ENCODE measurements at regions of chr5 and their contacts with region 1.

Region 1: DNA sequence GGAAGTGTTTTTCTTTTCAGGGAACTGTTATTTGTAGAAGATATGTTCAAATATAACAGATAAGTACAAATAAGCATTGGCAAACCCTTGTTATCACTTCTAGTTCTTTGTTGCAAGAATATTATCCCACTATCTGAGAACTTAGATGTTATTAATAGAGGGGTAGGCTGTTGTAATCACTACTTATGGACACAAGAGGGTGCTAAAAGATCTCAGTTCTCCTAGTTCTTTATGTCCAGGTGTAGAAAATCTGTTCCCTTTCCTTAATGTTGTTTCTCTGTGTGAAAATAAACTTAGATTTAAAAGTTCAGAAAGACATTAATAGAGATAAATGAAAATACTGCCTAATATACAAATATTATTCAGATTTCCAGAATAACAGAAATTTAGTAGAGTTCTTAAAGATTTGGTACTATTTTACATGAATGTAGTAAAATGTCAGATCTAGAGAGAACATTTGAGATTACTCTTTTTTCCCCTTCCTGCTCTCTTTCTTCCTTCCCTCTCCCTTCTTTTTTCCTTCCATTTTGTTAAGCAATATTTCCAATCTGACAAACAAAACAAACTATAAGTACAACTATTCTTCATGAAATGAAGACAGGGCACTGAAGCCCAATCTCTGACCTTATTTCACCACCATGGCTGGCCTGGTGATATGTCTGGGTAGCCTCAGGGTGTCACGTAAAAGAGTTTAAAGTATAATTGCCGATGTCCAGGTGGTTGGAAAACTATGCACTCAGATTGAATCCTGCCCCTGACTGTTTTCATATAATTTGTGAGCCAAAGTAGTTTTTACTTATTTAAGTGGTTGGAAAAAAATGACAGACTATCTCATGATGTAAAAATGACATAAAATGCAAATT is 43.6 kb upstream of the C5orf46 start:
- DNase-seq: no peak
- ATAC-seq: peak in 1 of 2 donors; percentile 54
- H3K4me3 ChIP-seq: no peak overlapping the region
- H3K27ac ChIP-seq: no peak overlapping the region
- H3K4me1 ChIP-seq: no peaks in the 10 kb centered on the region
- H3K27me3 ChIP-seq: no peaks in the 10 kb centered on the region

Region 2: GRCh38 chr5:148113243-148113642 is 163.3 kb after region 1 on chr5:
- intact Hi-C with region 1: loop called in 1 of 4 experiments (anchors 10 kb)
- DNase-seq: no peak
- ATAC-seq: no peak
- H3K4me3 ChIP-seq: no peak overlapping the region
- H3K27ac ChIP-seq: no peak overlapping the region
- H3K4me1 ChIP-seq: no peaks in the 10 kb centered on the region
- H3K27me3 ChIP-seq: no peaks in the 10 kb centered on the region

Region 3: GRCh38 chr5:148120317-148120716 is 170.4 kb after region 1 on chr5:
- intact Hi-C with region 1: loop called (anchors 5 to 10 kb)
- DNase-seq: no peak
- ATAC-seq: no peak
- H3K4me3 ChIP-seq: no peak overlapping the region
- H3K27ac ChIP-seq: no peak overlapping the region
- H3K4me1 ChIP-seq: no peaks in the 10 kb centered on the region
- H3K27me3 ChIP-seq: no peaks in the 10 kb centered on the region

Measured in right cardiac atrium (tissue), 5 donors.